Right cardiac atrium (tissue), 5 donors: ENCODE measurements at regions of chr9 and their contacts with region 1.

Region 1: GRCh38 chr9:127734747-127735529 is at the start of gene TOR2A:
- DNase-seq: peak; percentile 99
- ATAC-seq: peak; percentile 95 to 96
- H3K4me3 ChIP-seq: peak within 1 kb of the TSS; percentile 66
- H3K27ac ChIP-seq: peak within 1 kb of the TSS; percentile 90
- H3K4me1 ChIP-seq: peaks cover 6% of the 10 kb centered on the region
- H3K27me3 ChIP-seq: no peaks in the 10 kb centered on the region
- total RNA-seq, gene TOR2A: 3.1 to 3.9 (median 3.5) TPM

Region 2: DNA sequence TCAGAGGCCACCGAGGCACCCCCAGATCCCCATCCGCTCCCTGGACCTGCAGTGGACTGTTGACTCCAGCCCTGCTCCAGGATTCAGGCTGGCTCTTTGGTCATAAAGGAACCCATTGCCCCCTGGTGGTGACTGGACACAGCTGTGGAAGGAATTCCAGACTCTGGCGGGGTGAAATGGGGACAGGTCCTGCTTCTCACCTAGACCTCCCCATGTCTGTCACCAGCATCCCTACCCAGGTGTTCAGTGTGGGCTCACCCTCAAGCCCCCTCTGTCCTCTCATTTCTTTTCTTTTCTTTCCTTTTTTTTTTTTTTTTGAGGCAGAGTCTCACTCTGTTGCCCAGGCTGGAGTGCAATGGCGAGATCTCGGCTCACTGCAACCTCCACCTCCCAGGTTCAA is 148.4 kb before region 1 on chr9:
- intact Hi-C with region 1: loop called (anchors 5 kb)
- DNase-seq: peak; percentile 82 to 90 (median 87)
- ATAC-seq: peak; percentile 90
- H3K4me3 ChIP-seq: no peak overlapping the region
- H3K27ac ChIP-seq: no peak overlapping the region
- H3K4me1 ChIP-seq: no peaks in the 10 kb centered on the region
- H3K27me3 ChIP-seq: no peaks in the 10 kb centered on the region

Region 3: GRCh38 chr9:127684576-127684975 is 50.4 kb before region 1 on chr9:
- intact Hi-C with region 1: no loop called
- DNase-seq: no peak
- ATAC-seq: no peak
- H3K4me3 ChIP-seq: no peak overlapping the region
- H3K27ac ChIP-seq: no peak overlapping the region
- H3K4me1 ChIP-seq: no peaks in the 10 kb centered on the region
- H3K27me3 ChIP-seq: no peaks in the 10 kb centered on the region

Region 4: GRCh38 chr9:127779136-127779981 is 44.4 kb after region 1 on chr9:
- intact Hi-C with region 1: loop called in 2 of 4 experiments (anchors 2 to 5 kb)
- DNase-seq: peak in 1 of 3 donors; percentile 56
- ATAC-seq: peak; percentile 12 to 33
- H3K4me3 ChIP-seq: no peak overlapping the region
- H3K27ac ChIP-seq: no peak overlapping the region
- H3K4me1 ChIP-seq: no peaks in the 10 kb centered on the region
- H3K27me3 ChIP-seq: no peaks in the 10 kb centered on the region

Region 5: DNA sequence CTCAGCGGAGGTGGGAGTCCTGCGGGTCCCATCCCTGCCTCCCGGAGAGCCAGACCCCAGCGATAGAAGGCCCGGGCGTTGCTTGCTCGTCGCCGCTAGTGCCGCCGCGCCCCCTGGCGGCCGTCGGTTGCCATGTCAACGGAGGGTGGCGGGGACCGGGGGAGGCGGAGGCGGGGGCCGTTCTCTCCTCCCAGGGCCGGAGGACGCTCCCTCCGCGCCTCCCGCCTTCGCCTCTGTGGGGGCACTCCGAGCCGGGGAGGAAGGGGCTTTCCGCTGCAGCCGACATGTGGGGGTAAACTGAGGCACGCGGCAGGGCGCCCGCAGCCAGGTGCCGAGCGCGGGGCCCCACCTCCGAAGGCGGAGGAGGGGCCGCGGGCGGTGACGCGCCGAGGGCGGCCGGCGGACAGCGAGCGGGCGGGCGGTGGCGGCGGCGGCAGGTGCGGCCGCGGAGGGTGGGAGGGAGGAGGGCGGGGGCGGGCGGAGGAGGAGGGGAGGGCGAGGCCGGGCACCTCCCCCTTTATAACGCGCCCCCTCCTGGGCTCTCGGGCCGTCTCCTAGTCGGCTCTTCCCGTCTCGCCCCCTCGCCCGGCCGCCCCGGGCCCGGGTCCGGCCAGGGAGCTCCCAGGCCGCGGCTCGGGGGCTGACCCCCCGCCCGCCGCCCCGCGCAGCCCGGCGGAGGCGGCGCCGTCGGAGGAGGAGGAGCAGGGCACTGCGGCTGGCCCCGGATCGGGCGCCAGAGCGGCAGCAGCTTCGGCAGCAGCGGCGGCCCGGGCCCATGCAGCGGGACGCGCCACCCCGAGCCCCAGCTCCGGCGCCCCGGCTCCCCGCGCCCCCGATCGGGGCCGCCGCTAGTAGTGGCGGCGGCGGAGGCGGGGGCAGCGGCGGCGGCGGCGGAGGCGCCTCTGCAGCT is 50.3 kb after region 1 on chr9:
- intact Hi-C with region 1: loop called in 2 of 4 experiments (anchors 2 to 5 kb)
- DNase-seq: peak; percentile 88 to 96 (median 95)
- ATAC-seq: peak; percentile 61 to 69
- H3K4me3 ChIP-seq: peak overlapping the region; percentile 73
- H3K27ac ChIP-seq: peak overlapping the region; percentile 99
- H3K4me1 ChIP-seq: peaks cover 2% of the 10 kb centered on the region
- H3K27me3 ChIP-seq: no peaks in the 10 kb centered on the region

Region 6: DNA sequence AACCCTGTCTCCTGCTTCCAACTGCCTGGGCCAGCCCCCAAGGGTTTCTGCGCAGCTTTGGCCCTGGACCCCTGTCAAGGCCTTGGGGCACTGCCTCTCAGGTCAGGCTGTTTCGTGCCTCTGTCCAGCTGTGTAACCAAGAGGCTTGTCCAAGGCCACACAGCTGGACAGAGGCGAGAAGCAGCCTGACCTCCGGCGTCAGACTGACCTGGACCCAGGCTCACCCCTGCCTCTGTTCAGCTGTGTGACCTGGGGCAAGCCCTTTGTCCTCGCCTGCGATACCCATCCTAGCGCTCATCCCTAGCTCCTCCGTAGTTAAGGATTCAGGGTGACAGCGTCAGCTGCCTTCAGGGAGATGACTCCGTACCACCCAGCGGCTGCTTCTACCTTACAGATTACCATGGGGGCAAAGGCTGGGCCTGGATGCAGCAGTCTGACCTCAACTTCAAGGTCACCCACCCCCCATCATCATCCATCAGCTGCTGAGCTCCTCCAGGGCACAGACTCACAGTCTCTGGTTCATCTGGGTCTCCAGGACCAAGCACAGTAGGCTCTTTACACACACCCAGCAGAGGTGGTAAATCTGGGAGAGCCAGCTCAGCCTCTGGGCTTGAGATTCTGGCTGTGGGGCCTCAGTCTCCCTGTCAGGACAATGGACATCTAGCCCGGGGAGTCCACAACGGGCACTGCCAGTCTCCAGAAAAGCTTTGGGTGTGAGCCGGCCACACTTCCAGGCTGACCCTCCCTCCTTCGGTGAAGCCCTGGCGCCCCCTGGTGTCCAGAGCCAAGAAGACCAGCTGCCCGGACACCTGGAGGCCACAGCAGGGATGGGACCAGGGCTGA is 134.6 kb after region 1 on chr9:
- intact Hi-C with region 1: loop called in 3 of 4 experiments (anchors 5 to 10 kb)
- DNase-seq: peak; percentile 92 to 97 (median 95)
- ATAC-seq: peak; percentile 64 to 69
- H3K4me3 ChIP-seq: no peak overlapping the region
- H3K27ac ChIP-seq: peak overlapping the region; percentile 59
- H3K4me1 ChIP-seq: peaks cover 4% of the 10 kb centered on the region
- H3K27me3 ChIP-seq: no peaks in the 10 kb centered on the region

Region 7: GRCh38 chr9:128136816-128137793 is 402.2 kb after region 1 on chr9:
- intact Hi-C with region 1: no loop called
- DNase-seq: peak in 2 of 3 donors; percentile 4 to 28
- ATAC-seq: peak in 1 of 2 donors; percentile 16
- H3K4me3 ChIP-seq: no peak overlapping the region
- H3K27ac ChIP-seq: no peak overlapping the region
- H3K4me1 ChIP-seq: no peaks in the 10 kb centered on the region
- H3K27me3 ChIP-seq: no peaks in the 10 kb centered on the region